ENCODE measurements at regions of chr6 and their contacts with region 1.

Region 1: GRCh38 chr6:2634139-2634964 is 116.4 kb downstream of the MYLK4 start:
- DNase-seq: peak; percentile 88
- H3K4me3 ChIP-seq: peak overlapping the region; percentile 36
- H3K27ac ChIP-seq: no peak overlapping the region
- H3K4me1 ChIP-seq: peaks cover 6% of the 10 kb centered on the region
- H3K27me3 ChIP-seq: no peaks in the 10 kb centered on the region
- CTCF ChIP-seq: peak; percentile 98

Region 2: DNA sequence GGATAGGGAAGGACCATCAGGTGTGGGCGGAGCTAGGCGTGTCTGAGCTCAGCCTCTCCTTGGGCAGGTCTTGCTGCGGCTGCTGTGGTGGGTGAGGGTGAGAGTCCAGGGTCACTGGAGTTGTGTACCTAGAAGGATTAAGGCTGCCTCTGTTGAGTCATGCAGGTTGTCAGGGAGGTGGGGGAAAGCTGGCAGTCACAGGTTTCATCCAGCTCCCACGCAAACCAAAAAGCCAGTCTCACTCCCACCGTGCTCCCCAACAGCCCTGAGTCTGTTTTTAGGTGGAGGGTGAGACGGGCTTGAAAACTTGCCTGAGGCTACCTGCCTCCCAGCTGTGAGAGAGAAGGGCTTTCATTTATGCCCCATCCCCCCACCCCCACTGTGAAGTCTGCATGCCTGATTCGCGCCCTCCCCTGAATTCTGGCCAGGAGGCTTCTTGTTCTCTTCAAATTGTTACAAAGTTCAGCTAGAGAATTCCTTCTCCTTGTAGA is 45.1 kb before region 1 on chr6:
- CTCF ChIA-PET with region 1: interaction called, 10 read pairs
- POLR2A ChIA-PET with region 1: no interaction called
- intact Hi-C with region 1: no loop called
- DNase-seq: no peak
- H3K4me3 ChIP-seq: no peak overlapping the region
- H3K27ac ChIP-seq: no peak overlapping the region
- H3K4me1 ChIP-seq: no peaks in the 10 kb centered on the region
- H3K27me3 ChIP-seq: no peaks in the 10 kb centered on the region
- CTCF ChIP-seq: no peak